Common myeloid progenitor, CD34-positive (primary cell): ENCODE measurements at regions of chr3 and their contacts with region 1.

Region 1: GRCh38 chr3:22115581-22115980 is 364.6 kb upstream of the ZNF385D start:
- DNase-seq: no peak
- H3K4me3 ChIP-seq: no peak overlapping the region
- H3K27ac ChIP-seq: no peak overlapping the region
- H3K4me1 ChIP-seq: no peaks in the 10 kb centered on the region
- H3K27me3 ChIP-seq: no peaks in the 10 kb centered on the region

Region 2: GRCh38 chr3:22089284-22089683 is 26.3 kb before region 1 on chr3:
- CTCF ChIA-PET with region 1: interaction called, 15 read pairs
- POLR2A ChIA-PET with region 1: no interaction called
- DNase-seq: peak; percentile 51 to 85 (median 62)
- H3K4me3 ChIP-seq: peak overlapping the region in 3 of 7 experiments; percentile 33 to 75 (median 37)
- H3K27ac ChIP-seq: no peak overlapping the region
- H3K4me1 ChIP-seq: peaks cover 0 to 4% (median 2%) of the 10 kb centered on the region in 4 experiments
- H3K27me3 ChIP-seq: no peaks in the 10 kb centered on the region

Region 3: GRCh38 chr3:22141769-22142168 is 26.2 kb after region 1 on chr3:
- CTCF ChIA-PET with region 1: no interaction called
- POLR2A ChIA-PET with region 1: no interaction called
- DNase-seq: no peak
- H3K4me3 ChIP-seq: no peak overlapping the region
- H3K27ac ChIP-seq: no peak overlapping the region
- H3K4me1 ChIP-seq: no peaks in the 10 kb centered on the region
- H3K27me3 ChIP-seq: no peaks in the 10 kb centered on the region

Region 4: DNA sequence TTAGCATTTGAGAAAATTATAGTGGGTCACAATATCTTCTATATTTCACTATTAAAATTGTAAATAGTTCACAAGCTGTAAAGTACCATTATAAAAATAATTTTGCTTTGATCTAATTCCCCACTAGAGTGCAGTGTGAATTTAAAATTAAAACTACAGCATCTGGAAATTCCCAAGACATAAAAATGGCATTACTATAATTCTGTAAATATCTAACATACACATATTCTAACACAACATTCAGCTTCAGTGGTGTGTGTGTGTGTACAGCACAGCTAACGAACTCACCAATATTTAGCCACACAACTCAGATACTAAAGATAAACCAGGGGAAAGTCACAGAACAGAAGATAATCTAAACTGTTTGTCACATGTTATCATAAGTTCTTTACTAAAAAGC is 60.4 kb after region 1 on chr3:
- CTCF ChIA-PET with region 1: no interaction called
- POLR2A ChIA-PET with region 1: no interaction called
- DNase-seq: peak; percentile 12 to 55 (median 28)
- H3K4me3 ChIP-seq: no peak overlapping the region
- H3K27ac ChIP-seq: peak overlapping the region in 1 of 2 experiments; percentile 51
- H3K4me1 ChIP-seq: peaks cover 0 to 4% (median 0%) of the 10 kb centered on the region in 4 experiments
- H3K27me3 ChIP-seq: no peaks in the 10 kb centered on the region